ENCODE measurements at regions of chr12 and their contacts with region 1.

Region 1: DNA sequence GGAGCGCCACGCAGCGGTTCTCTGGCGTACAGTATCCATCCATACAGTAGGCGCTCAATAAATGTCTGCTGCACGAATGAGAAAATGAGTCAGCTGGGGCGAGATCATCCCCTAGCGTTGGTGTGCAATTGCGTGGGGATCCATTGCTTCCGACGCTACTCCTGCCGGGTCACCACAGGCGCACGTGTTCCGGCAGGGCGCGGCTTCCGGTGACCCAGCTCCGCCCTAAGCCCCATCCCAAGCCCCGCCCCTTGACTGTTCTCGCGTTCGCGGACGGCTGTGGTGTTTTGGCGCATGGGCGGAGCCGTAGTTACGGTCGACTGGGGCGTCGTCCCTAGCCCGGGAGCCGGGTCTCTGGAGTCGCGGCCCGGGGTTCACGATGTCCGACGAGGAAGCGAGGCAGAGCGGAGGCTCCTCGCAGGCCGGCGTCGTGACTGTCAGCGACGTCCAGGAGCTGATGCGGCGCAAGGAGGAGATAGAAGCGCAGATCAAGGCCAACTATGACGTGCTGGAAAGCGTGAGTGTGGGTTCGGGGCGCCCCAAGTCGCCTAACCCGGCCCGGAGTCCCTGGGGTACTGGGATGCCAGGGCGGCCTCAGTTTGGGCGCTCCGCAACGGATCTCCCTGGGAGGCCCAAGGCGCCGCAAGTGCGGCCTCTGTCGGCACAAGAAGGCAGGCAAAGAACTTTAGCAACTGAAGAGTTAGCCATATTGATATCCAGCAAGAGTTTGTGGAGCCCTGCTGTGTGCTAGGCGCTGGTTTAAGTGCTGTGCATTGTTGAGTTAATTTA is at the start of gene PSMD9:
- DNase-seq: peak; percentile 97 to 98 (median 98)
- ATAC-seq: peak; percentile 99
- H3K4me3 ChIP-seq: peak within 1 kb of the TSS; percentile 51 to 78
- H3K27ac ChIP-seq: peak within 1 kb of the TSS; percentile 90 to 98 (median 94)
- H3K4me1 ChIP-seq: peaks cover 36% of the 10 kb centered on the region
- H3K27me3 ChIP-seq: no peaks in the 10 kb centered on the region
- CTCF ChIP-seq: peak; percentile 28 to 77 (median 66)
- POLR2A ChIP-seq: peak; percentile 69 to 86 (median 86)
- total RNA-seq, gene PSMD9: 23.1 to 42.3 TPM

Region 2: GRCh38 chr12:121697098-121697698 is 191.5 kb before region 1 on chr12:
- intact Hi-C with region 1: loop called (anchors 10 kb)
- DNase-seq: peak in 2 of 4 donors; percentile 18 to 58
- ATAC-seq: peak; percentile 71
- H3K4me3 ChIP-seq: no peak overlapping the region
- H3K27ac ChIP-seq: no peak overlapping the region
- H3K4me1 ChIP-seq: no peaks in the 10 kb centered on the region
- H3K27me3 ChIP-seq: no peaks in the 10 kb centered on the region
- CTCF ChIP-seq: peak; percentile 17 to 79 (median 65)
- POLR2A ChIP-seq: no peak

Region 3: DNA sequence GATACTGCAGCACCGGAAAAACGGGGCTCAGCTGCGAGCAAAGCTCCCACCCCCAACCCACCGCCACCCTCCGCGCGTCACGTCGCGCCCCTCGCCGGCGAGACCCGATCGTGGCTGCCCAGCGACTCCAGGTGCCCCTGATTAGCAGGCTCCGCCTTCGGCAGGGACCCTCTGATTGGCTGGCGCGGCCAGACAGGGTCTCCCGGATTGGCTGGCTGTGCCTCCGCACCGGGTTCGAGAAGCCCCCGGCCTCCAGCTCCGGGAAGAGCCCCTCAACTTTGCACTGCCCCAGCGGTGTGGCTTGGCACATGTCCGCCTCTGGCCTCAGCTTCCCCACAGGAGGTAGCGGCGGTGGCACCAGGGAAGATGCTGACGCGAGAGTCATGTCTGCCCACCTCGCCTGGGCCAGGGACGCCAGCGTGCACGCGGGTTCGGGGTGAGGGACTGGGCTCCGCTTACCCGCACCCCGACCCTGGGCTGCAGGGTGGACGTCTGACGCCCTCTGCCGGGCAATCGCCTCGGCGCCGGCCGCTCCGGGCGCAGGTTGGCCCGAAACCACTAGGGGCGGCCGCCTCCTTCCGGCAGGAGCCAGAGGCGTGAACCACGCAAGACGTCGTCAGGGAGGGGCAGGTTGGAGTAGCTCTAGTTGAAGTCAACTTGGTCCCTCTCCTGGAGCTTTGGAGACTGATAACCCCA is 94.7 kb before region 1 on chr12:
- intact Hi-C with region 1: loop called (anchors 10 kb)
- DNase-seq: peak; percentile 92 to 93 (median 92)
- ATAC-seq: peak; percentile 71
- H3K4me3 ChIP-seq: peak overlapping the region; percentile 4 to 43
- H3K27ac ChIP-seq: peak overlapping the region; percentile 89 to 100 (median 100)
- H3K4me1 ChIP-seq: peaks cover 74% of the 10 kb centered on the region
- H3K27me3 ChIP-seq: no peaks in the 10 kb centered on the region
- CTCF ChIP-seq: peak; percentile 100
- POLR2A ChIP-seq: peak in 2 of 3 donors; percentile 51 to 55

Region 4: GRCh38 chr12:122182887-122183585 is 294.4 kb after region 1 on chr12 and contains the start of gene LRRC43:
- intact Hi-C with region 1: no loop called
- DNase-seq: peak; percentile 41 to 66 (median 48)
- ATAC-seq: peak; percentile 79
- H3K4me3 ChIP-seq: peak within 1 kb of the TSS in 1 of 2 donors; percentile 30
- H3K27ac ChIP-seq: peak within 1 kb of the TSS in 1 of 4 donors; percentile 21
- H3K4me1 ChIP-seq: peaks cover 11% of the 10 kb centered on the region
- H3K27me3 ChIP-seq: no peaks in the 10 kb centered on the region
- CTCF ChIP-seq: no peak
- POLR2A ChIP-seq: no peak
- total RNA-seq, gene LRRC43: 2.3 TPM in 1 of 2 donors, not detected in the other

Region 5: DNA sequence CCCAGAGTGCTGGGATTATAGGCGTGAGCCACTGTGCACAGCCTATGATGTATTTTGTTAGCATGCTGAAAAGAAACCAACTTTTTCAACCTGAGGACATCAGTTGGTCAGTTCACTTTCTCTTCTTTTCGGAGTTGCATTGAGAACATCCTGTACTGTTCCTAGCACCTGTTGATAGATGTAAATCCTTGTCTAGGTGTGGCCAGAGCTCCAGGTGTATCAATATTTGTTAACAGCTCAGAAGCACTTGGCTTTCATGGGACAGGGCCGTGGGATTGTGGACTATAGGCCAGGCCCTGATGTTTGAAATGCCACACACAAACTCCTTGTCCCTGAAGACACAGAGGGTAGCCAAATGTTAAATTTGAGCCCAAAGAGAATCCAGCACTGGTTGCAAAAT is 799.6 kb after region 1 on chr12:
- intact Hi-C with region 1: no loop called
- DNase-seq: no peak
- ATAC-seq: no peak
- H3K4me3 ChIP-seq: no peak overlapping the region
- H3K27ac ChIP-seq: no peak overlapping the region
- H3K4me1 ChIP-seq: no peaks in the 10 kb centered on the region
- H3K27me3 ChIP-seq: no peaks in the 10 kb centered on the region
- CTCF ChIP-seq: no peak
- POLR2A ChIP-seq: no peak